Activated CD8-positive, alpha-beta T cell treated with anti-CD3 and anti-CD28 coated beads for 36 hours (primary cell): ENCODE measurements at regions of chr17 and their contacts with region 1.

Region 1: GRCh38 chr17:45148183-45149036 is at the start of gene HEXIM1:
- DNase-seq: peak; percentile 99
- ATAC-seq: peak; percentile 82
- H3K4me3 Mint-ChIP-seq: peak within 1 kb of the TSS; percentile 98
- H3K27ac Mint-ChIP-seq: peak within 1 kb of the TSS; percentile 100
- H3K4me1 Mint-ChIP-seq: peaks cover 40% of the 10 kb centered on the region
- H3K27me3 Mint-ChIP-seq: no peaks in the 10 kb centered on the region
- CTCF ChIP-seq: no peak
- total RNA-seq, gene HEXIM1: 22.6 to 23.5 TPM

Region 2: GRCh38 chr17:44864866-44865660 is 283.3 kb before region 1 on chr17:
- CTCF ChIA-PET with region 1: no interaction called
- POLR2A ChIA-PET with region 1: no interaction called
- intact Hi-C with region 1: no loop called
- DNase-seq: peak; percentile 79
- ATAC-seq: peak; percentile 80
- H3K4me3 Mint-ChIP-seq: no peak overlapping the region
- H3K27ac Mint-ChIP-seq: no peak overlapping the region
- H3K4me1 Mint-ChIP-seq: no peaks in the 10 kb centered on the region
- H3K27me3 Mint-ChIP-seq: no peaks in the 10 kb centered on the region
- CTCF ChIP-seq: peak; percentile 67

Region 3: DNA sequence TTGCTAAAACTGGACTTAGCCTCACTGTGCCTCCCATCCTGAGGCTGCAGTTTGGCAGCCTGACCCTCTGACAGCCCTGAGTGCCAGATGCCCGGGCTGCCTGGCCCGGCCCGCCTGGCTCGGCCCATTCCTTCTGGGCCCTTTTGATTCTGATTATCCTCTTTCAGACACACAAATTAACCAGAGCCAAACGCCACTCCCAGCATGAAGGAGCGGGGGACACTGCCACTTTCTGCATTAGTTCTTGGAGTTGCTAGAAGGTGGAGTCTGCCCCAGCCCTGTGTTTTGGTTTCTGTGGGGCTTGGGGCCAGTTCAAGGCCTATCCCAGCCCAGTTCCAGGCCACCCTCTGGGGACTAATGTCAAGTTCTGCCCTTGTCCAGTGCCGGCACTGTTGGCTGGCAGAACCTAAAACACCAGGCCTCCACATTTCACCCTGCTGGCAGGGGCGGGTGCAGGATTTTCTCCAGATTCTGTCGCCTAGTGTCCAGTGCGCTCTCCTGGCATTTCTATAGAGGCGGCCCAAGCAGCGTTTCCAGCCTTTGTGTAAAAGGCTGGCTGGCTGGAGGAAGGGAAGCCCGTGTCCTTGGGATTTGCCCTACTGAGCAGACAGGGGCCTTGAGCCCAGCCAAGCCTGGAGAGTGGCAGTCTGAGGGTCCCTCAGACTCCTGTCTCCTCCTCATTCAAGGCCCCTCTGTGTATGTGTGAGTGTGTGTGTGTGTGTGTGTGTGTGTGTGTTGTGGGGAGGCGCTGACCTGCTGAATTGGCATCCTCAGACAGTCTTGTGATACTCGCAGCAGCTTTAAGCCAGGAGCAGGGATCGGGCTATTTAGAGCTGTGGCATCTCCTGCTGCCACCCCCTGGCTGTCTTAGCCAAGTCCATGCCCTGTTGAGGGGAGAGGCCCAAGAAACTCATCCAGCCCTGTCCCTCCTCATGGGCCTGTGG is 37.5 kb before region 1 on chr17:
- CTCF ChIA-PET with region 1: no interaction called
- POLR2A ChIA-PET with region 1: no interaction called
- intact Hi-C with region 1: no loop called
- DNase-seq: no peak
- ATAC-seq: no peak
- H3K4me3 Mint-ChIP-seq: no peak overlapping the region
- H3K27ac Mint-ChIP-seq: no peak overlapping the region
- H3K4me1 Mint-ChIP-seq: no peaks in the 10 kb centered on the region
- H3K27me3 Mint-ChIP-seq: no peaks in the 10 kb centered on the region
- CTCF ChIP-seq: no peak

Region 4: GRCh38 chr17:45161019-45161825 is 12.8 kb after region 1 on chr17:
- CTCF ChIA-PET with region 1: interaction called, 145 read pairs
- POLR2A ChIA-PET with region 1: interaction called, 200 read pairs
- intact Hi-C with region 1: loop called (anchors 2 kb)
- DNase-seq: peak; percentile 99
- ATAC-seq: peak; percentile 97
- H3K4me3 Mint-ChIP-seq: peak overlapping the region; percentile 95
- H3K27ac Mint-ChIP-seq: peak overlapping the region; percentile 99
- H3K4me1 Mint-ChIP-seq: peaks cover 39% of the 10 kb centered on the region
- H3K27me3 Mint-ChIP-seq: no peaks in the 10 kb centered on the region
- CTCF ChIP-seq: no peak

Region 5: GRCh38 chr17:45197555-45198334 is 49.3 kb after region 1 on chr17:
- CTCF ChIA-PET with region 1: interaction called, 208 read pairs
- POLR2A ChIA-PET with region 1: interaction called, 34 read pairs
- intact Hi-C with region 1: no loop called
- DNase-seq: peak; percentile 91
- ATAC-seq: peak; percentile 100
- H3K4me3 Mint-ChIP-seq: no peak overlapping the region
- H3K27ac Mint-ChIP-seq: no peak overlapping the region
- H3K4me1 Mint-ChIP-seq: peaks cover 5% of the 10 kb centered on the region
- H3K27me3 Mint-ChIP-seq: no peaks in the 10 kb centered on the region
- CTCF ChIP-seq: peak; percentile 99

Region 6: GRCh38 chr17:45235416-45236281 is 87.2 kb after region 1 on chr17:
- CTCF ChIA-PET with region 1: interaction called, 20 read pairs
- POLR2A ChIA-PET with region 1: interaction called, 21 read pairs
- intact Hi-C with region 1: no loop called
- DNase-seq: peak; percentile 92
- ATAC-seq: peak; percentile 63
- H3K4me3 Mint-ChIP-seq: no peak overlapping the region
- H3K27ac Mint-ChIP-seq: peak overlapping the region; percentile 99
- H3K4me1 Mint-ChIP-seq: peaks cover 55% of the 10 kb centered on the region
- H3K27me3 Mint-ChIP-seq: no peaks in the 10 kb centered on the region
- CTCF ChIP-seq: peak; percentile 76

Region 7: DNA sequence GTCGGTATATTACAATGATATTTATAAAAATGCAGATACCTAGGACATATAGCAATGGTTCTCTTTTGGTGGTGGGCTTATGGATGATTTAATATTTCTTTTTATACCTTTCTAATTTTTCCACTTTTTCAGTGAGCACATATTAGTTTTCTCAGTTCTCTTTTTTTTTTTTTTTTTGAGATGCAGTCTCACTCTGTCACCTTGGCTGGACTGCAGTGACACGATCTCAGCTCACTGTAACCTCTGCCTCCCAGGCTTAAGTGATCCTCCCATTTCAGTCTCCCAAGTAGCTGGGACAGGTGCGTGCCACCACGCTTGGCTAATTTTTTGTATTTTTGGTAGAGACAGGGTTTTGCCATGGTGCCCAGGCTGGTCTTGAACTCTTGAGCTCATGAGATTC is 153.3 kb after region 1 on chr17:
- CTCF ChIA-PET with region 1: no interaction called
- POLR2A ChIA-PET with region 1: no interaction called
- intact Hi-C with region 1: no loop called
- DNase-seq: no peak
- ATAC-seq: no peak
- H3K4me3 Mint-ChIP-seq: no peak overlapping the region
- H3K27ac Mint-ChIP-seq: peak overlapping the region; percentile 57
- H3K4me1 Mint-ChIP-seq: peaks cover 80% of the 10 kb centered on the region
- H3K27me3 Mint-ChIP-seq: no peaks in the 10 kb centered on the region
- CTCF ChIP-seq: no peak

Region 8: GRCh38 chr17:45317112-45317928 is 168.9 kb after region 1 on chr17:
- CTCF ChIA-PET with region 1: interaction called, 4 read pairs
- POLR2A ChIA-PET with region 1: interaction called, 25 read pairs
- intact Hi-C with region 1: loop called (anchors 5 kb)
- DNase-seq: peak; percentile 100
- ATAC-seq: peak; percentile 81
- H3K4me3 Mint-ChIP-seq: peak overlapping the region; percentile 81
- H3K27ac Mint-ChIP-seq: peak overlapping the region; percentile 88
- H3K4me1 Mint-ChIP-seq: peaks cover 60% of the 10 kb centered on the region
- H3K27me3 Mint-ChIP-seq: no peaks in the 10 kb centered on the region
- CTCF ChIP-seq: no peak